ENCODE measurements at regions of chr20 and their contacts with region 1.

Region 1: GRCh38 chr20:23147964-23148730 is 62.0 kb upstream of the CD93 start:
- DNase-seq: peak; percentile 35
- H3K4me3 Mint-ChIP-seq: peak overlapping the region; percentile 35
- H3K27ac Mint-ChIP-seq: peak overlapping the region; percentile 90
- H3K4me1 Mint-ChIP-seq: peaks cover 80% of the 10 kb centered on the region
- H3K27me3 Mint-ChIP-seq: peaks cover 12% of the 10 kb centered on the region

Region 2: DNA sequence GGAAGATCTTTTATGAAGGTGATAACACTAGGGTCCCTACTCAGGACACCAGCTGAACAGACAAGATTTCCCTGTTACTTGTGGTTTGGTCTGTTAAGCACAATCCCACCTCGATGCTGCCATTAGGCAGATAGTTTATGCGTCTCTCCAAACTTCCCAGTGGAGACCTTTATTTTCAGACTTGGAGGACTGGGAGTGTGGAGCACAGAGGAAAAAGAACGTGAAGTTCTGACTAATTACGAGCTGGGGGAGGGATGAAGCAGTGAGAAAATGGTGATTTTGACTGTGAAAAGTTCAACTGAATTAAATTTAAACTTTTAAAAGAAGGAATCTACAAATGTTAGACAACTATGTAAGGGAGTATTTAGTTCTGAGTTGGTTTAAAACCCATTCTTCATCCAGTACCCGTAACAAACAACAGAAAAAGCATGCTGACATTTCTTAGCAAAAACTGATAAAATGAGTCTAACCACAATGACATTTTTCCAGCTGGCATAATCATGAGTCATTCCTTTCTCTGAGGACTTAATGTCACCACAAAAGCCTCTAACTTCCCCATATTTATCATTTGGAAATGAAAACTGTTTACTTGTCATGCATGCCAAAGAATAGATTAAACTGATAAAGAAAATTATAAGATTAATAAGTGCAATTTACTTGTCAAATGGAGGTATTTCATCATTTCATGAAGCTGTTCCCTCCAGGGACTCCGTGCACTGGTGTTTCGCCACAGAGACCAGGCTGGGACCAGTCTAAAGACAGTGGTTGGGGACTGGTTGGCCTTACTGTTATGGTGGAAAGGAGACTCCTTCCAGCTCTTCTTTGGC is 226.3 kb before region 1 on chr20:
- intact Hi-C with region 1: loop called (anchors 5 kb)
- DNase-seq: no peak
- H3K4me3 Mint-ChIP-seq: no peak overlapping the region
- H3K27ac Mint-ChIP-seq: peak overlapping the region; percentile 41
- H3K4me1 Mint-ChIP-seq: peaks cover 8% of the 10 kb centered on the region
- H3K27me3 Mint-ChIP-seq: peaks cover 3% of the 10 kb centered on the region

Region 3: GRCh38 chr20:23086056-23086566 is 62.0 kb before region 1 on chr20 and contains the start of gene CD93:
- intact Hi-C with region 1: loop called (anchors 1 kb)
- DNase-seq: peak; percentile 42
- H3K4me3 Mint-ChIP-seq: peak within 1 kb of the TSS; percentile 69
- H3K27ac Mint-ChIP-seq: peak within 1 kb of the TSS; percentile 87
- H3K4me1 Mint-ChIP-seq: peaks cover 30% of the 10 kb centered on the region
- H3K27me3 Mint-ChIP-seq: peaks cover 7% of the 10 kb centered on the region
- total RNA-seq, gene CD93: 1.2 and 1.3 TPM in 2 replicates

Region 4: GRCh38 chr20:23161968-23162696 is 14.0 kb after region 1 on chr20:
- intact Hi-C with region 1: no loop called
- DNase-seq: no peak
- H3K4me3 Mint-ChIP-seq: no peak overlapping the region
- H3K27ac Mint-ChIP-seq: no peak overlapping the region
- H3K4me1 Mint-ChIP-seq: peaks cover 29% of the 10 kb centered on the region
- H3K27me3 Mint-ChIP-seq: no peaks in the 10 kb centered on the region

Measured in activated T-helper 1 cell treated with anti-CD3 and anti-CD28 coated beads, Interleukin-12 subunit alpha, Interleukin-12 subunit beta, Interleukin-2, Interleukin-4 antibody, amounts not matched to agents 30 ng/mL and 10 ng/mL and 1 ng/mL, durations not matched to agents 14 hours and 24 hours and 36 hours (primary cell).